ENCODE measurements at regions of chr20 and their contacts with region 1.

Region 1: DNA sequence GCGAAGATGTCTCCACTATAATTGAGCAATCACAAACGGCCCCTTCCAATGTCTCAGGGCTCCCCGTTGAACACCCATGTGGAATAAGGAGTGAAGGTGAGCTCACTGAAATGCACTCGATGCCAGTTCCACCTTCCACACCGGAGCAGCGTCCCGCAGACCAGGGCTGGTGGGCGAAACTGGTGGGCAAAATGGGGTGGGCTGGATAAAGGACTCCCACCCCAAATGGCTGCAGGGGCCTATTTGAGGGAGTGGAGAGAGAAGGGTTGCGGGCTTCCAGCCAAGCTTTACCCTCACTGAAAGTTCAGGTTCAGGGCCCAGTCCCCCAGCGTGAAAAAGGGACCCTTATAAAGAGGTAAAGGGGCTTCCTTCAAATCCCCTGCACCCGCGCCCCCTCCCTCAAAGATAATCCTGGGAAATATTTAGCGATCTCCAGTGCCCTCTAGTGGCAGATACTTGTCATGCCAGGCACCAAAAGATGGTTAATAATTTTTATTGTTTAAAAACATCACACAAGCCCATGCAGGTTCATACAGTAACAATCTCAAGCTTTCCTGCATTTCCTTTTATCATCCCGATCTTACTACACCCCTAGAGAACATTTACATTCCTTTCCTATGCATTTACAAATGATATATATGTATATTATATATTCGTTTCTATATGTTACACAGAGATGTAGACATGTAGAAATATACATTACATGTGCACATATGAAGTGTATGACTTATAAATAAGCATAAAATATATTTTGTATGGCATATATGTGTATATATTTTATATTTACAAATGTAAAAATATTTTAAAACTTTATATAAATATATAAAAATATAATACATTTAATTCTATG is 58.2 kb upstream of the NKX2-2 start:
- DNase-seq: peak; percentile 40
- H3K4me3 ChIP-seq: no peak overlapping the region
- H3K27ac ChIP-seq: no peak overlapping the region
- H3K4me1 ChIP-seq: peaks cover 3% of the 10 kb centered on the region
- CTCF ChIP-seq: peak; percentile 96

Region 2: GRCh38 chr20:20860078-20860806 is 711.8 kb before region 1 on chr20:
- CTCF ChIA-PET with region 1: no interaction called
- POLR2A ChIA-PET with region 1: no interaction called
- intact Hi-C with region 1: loop called (anchors 10 kb)
- DNase-seq: peak; percentile 82
- H3K4me3 ChIP-seq: no peak overlapping the region
- H3K27ac ChIP-seq: no peak overlapping the region
- H3K4me1 ChIP-seq: no peaks in the 10 kb centered on the region
- CTCF ChIP-seq: peak; percentile 97

Region 3: GRCh38 chr20:21529863-21530262 is 42.2 kb before region 1 on chr20:
- CTCF ChIA-PET with region 1: no interaction called
- POLR2A ChIA-PET with region 1: no interaction called
- intact Hi-C with region 1: loop called (anchors 2 kb)
- DNase-seq: peak; percentile 48
- H3K4me3 ChIP-seq: no peak overlapping the region
- H3K27ac ChIP-seq: no peak overlapping the region
- H3K4me1 ChIP-seq: peaks cover 8% of the 10 kb centered on the region
- CTCF ChIP-seq: peak; percentile 82

Region 4: GRCh38 chr20:21548390-21549035 is 23.6 kb before region 1 on chr20:
- CTCF ChIA-PET with region 1: no interaction called
- POLR2A ChIA-PET with region 1: no interaction called
- intact Hi-C with region 1: no loop called
- DNase-seq: peak; percentile 82
- H3K4me3 ChIP-seq: peak overlapping the region; percentile 29
- H3K27ac ChIP-seq: peak overlapping the region; percentile 81
- H3K4me1 ChIP-seq: peaks cover 22% of the 10 kb centered on the region
- CTCF ChIP-seq: no peak